ENCODE measurements at regions of chr17 and their contacts with region 1.

Region 1: DNA sequence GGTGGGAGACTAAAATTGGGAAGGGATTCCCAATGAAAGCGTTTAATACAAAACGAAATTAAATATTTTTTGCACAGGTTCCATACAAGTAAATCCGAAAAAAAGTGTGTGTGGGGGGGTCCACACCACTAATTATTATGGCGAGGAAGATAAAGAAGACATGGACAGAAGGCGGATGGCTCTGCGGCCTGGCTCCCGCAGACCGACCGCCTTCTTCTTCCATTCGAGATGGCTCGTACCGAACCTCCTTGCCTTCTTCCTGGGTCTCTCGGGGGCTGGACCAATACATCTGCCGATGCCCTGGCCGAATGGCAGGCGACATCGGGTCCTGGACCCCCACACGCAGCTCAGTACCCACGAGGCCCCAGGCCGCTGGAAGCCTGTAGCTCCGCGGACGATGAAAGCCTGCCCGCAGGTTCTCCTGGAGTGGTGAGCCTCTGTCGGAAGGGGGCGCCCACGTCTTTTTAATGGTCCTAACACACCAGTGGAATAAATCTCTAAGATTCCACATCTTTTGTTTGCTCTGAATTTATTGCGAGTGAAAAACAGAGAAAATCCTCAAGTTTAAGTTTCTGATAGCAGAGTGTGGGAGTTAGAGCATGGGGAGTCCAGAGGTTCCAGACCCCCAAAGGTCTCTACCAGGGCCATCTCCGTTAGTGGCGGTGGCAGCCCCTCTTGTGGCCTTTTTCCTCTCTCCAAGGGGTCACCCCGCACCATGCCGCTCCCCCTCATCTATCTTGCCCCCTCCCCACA is 1.4 kb downstream of the PRAC2 start:
- DNase-seq: peak; percentile 92
- H3K4me3 ChIP-seq: peak overlapping the region; percentile 72
- H3K27ac ChIP-seq: peak overlapping the region; percentile 98
- H3K4me1 ChIP-seq: peaks cover 32% of the 10 kb centered on the region
- H3K27me3 ChIP-seq: no peaks in the 10 kb centered on the region
- CTCF ChIP-seq: peak; percentile 90

Region 2: DNA sequence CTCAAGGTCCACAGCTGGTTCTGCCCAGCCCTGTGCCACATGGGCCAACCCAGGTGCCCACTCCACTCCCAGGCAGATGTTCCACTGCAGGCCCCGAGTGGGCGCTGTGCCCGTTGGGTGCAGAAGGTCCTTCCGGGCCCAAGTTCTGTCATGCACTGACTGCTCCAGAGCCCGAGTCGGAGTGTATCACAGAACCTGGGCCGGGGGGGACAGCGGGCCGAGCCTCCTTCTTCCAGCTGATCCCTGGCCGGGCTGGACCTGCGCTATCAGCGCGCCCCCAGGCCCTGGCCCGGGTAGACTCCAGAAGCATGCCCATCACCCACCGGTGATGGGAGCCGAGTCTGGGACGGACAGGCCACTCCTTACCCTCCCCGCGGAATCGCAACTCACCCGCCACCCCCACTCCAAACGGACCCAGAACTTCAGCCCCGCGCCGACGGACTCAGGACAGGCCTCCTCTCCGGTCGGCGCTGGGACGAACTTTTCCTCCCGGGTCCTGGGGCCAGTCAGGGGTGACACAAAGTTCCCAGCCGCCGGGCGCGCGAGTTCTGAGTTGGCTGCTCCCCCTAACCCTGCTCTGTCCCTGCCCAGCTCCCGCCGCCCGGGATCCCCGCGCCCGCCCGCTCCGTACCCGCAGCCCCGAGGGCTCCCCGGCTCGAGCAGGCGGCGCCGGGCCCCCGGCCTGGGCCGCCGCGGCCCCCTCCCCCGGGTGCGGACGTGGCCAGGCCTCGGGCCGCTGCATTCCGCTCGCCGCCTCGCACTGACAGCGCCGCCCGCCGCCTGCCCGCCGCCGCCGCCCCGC is 687.2 kb before region 1 on chr17 and contains the start of gene COPZ2:
- CTCF ChIA-PET with region 1: no interaction called
- POLR2A ChIA-PET with region 1: interaction called, 10 read pairs
- intact Hi-C with region 1: no loop called
- DNase-seq: peak; percentile 40
- H3K4me3 ChIP-seq: peak within 1 kb of the TSS; percentile 54
- H3K27ac ChIP-seq: no peak within 1 kb of the TSS
- H3K4me1 ChIP-seq: no peaks in the 10 kb centered on the region
- H3K27me3 ChIP-seq: peaks cover 10% of the 10 kb centered on the region
- CTCF ChIP-seq: peak; percentile 64
- total RNA-seq, gene COPZ2: 2.3 TPM in 1 of 2 replicates, not detected in the other

Region 3: GRCh38 chr17:48678141-48678971 is 46.1 kb before region 1 on chr17:
- CTCF ChIA-PET with region 1: interaction called, 26 read pairs
- POLR2A ChIA-PET with region 1: interaction called, 8 read pairs
- intact Hi-C with region 1: loop called (anchors 1 kb)
- DNase-seq: peak; percentile 83
- H3K4me3 ChIP-seq: peak overlapping the region; percentile 39
- H3K27ac ChIP-seq: no peak overlapping the region
- H3K4me1 ChIP-seq: peaks cover 17% of the 10 kb centered on the region
- H3K27me3 ChIP-seq: no peaks in the 10 kb centered on the region
- CTCF ChIP-seq: peak; percentile 99

Region 4: GRCh38 chr17:48804925-48805411 is 80.5 kb after region 1 on chr17:
- CTCF ChIA-PET with region 1: interaction called, 13 read pairs
- POLR2A ChIA-PET with region 1: no interaction called
- intact Hi-C with region 1: no loop called
- DNase-seq: peak; percentile 87
- H3K4me3 ChIP-seq: peak overlapping the region; percentile 24
- H3K27ac ChIP-seq: peak overlapping the region; percentile 89
- H3K4me1 ChIP-seq: peaks cover 50% of the 10 kb centered on the region
- H3K27me3 ChIP-seq: no peaks in the 10 kb centered on the region
- CTCF ChIP-seq: peak; percentile 96

Region 5: DNA sequence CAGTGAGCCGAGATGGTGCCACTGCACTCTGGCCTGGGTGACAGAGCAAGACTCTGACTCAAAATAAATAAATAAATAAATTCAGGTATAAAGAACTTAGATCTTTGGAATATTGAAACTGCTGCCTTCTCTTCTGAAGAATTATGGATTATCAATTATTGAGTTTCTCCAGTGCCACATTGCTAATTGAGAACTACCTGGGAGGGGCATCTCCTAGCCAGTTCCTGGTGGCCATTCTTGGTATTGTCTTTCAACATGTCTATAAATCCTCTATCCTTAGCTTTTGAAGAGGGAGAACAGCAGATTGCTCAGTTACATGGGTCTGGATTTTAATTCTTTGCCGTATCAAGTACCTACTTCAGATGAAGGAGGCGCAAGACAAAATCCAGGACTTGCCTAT is 135.6 kb after region 1 on chr17:
- CTCF ChIA-PET with region 1: no interaction called
- POLR2A ChIA-PET with region 1: no interaction called
- intact Hi-C with region 1: no loop called
- DNase-seq: no peak
- H3K4me3 ChIP-seq: no peak overlapping the region
- H3K27ac ChIP-seq: no peak overlapping the region
- H3K4me1 ChIP-seq: no peaks in the 10 kb centered on the region
- H3K27me3 ChIP-seq: no peaks in the 10 kb centered on the region
- CTCF ChIP-seq: peak; percentile 31

Region 6: GRCh38 chr17:48892940-48893645 is 168.7 kb after region 1 on chr17:
- CTCF ChIA-PET with region 1: no interaction called
- POLR2A ChIA-PET with region 1: no interaction called
- intact Hi-C with region 1: loop called (anchors 5 kb)
- DNase-seq: peak; percentile 58
- H3K4me3 ChIP-seq: peak overlapping the region; percentile 67
- H3K27ac ChIP-seq: peak overlapping the region; percentile 75
- H3K4me1 ChIP-seq: peaks cover 11% of the 10 kb centered on the region
- H3K27me3 ChIP-seq: no peaks in the 10 kb centered on the region
- CTCF ChIP-seq: no peak

Region 7: GRCh38 chr17:48961516-48962233 is 237.2 kb after region 1 on chr17:
- CTCF ChIA-PET with region 1: no interaction called
- POLR2A ChIA-PET with region 1: no interaction called
- intact Hi-C with region 1: no loop called
- DNase-seq: no peak
- H3K4me3 ChIP-seq: no peak overlapping the region
- H3K27ac ChIP-seq: no peak overlapping the region
- H3K4me1 ChIP-seq: peaks cover 3% of the 10 kb centered on the region
- H3K27me3 ChIP-seq: no peaks in the 10 kb centered on the region
- CTCF ChIP-seq: no peak

Region 8: DNA sequence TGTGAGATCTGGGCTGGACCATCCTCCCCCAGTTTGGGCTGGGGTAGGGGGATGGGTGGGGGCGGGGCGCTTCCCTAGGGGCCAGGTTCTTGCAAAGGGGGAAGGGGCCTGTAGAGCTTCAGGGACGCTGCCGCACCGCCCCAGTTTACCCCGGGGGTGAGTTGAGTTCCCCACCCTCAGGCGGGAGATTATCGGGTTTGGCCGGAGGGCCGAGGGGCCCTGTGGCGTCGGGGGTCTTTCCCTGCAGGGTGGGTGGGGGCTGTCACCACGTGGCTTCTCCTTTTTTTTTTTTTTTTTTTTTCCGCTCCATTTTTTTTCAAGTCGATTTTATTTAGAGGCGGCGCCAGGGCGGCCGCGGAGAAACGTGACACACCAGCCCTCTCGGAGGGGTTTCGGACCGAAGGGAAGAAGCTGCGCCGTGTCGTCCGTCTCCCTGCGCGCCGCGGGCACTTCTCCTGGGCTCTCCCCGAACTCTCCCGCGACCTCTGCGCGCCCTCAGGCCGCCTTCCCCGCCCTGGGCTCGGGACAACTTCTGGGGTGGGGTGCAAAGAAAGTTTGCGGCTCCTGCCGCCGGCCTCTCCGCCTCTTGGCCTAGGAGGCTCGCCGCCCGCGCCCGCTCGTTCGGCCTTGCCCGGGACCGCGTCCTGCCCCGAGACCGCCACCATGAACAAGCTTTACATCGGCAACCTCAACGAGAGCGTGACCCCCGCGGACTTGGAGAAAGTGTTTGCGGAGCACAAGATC is 272.8 kb after region 1 on chr17 and contains the start of gene IGF2BP1:
- CTCF ChIA-PET with region 1: interaction called, 3 read pairs
- POLR2A ChIA-PET with region 1: no interaction called
- intact Hi-C with region 1: loop called (anchors 5 kb)
- DNase-seq: peak; percentile 97
- H3K4me3 ChIP-seq: peak within 1 kb of the TSS; percentile 97
- H3K27ac ChIP-seq: peak within 1 kb of the TSS; percentile 100
- H3K4me1 ChIP-seq: peaks cover 21% of the 10 kb centered on the region
- H3K27me3 ChIP-seq: no peaks in the 10 kb centered on the region
- CTCF ChIP-seq: no peak
- total RNA-seq, gene IGF2BP1: 495 and 517 TPM in 2 replicates